GM13976 (cell line): ENCODE measurements at regions of chr2 and their contacts with region 1.

Region 1: DNA sequence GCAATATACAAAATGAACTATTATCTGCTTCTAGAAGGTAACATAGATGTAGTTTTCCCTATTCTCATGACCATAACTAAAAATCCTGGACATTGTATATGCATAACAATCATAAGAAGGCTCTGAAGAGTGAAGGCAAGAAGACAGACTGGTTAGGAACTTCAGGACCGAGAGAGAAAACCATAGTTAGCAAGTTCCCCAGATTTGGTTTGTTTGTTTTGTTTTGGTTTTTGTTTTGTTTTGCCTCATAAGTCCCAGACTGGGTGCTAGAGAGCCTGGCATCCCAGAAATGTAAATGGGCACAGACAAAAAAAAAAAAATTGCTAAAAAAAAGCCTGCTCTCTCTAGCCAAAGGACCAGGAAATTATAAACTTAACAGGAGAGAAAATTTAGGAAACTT is 192.2 kb upstream of the FBXO11 start:
- DNase-seq: no peak
- CTCF ChIP-seq: no peak

Region 2: DNA sequence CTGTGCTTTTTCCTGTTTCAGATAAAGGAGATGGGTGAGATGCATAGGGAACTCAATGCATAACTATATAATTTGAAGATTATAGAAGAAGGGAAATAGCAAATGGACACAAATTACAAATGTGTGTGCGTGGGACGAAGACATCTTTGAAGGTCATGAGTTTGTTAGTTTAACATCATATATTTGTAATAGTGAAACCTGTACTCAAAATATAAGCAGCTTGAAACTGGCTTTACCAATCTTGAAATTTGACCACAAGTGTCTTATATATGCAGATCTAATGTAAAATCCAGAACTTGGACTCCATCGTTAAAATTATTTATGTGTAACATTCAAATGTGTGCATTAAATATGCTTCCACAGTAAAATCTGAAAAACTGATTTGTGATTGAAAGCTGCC is 712.0 kb before region 1 on chr2:
- in situ Hi-C with region 1: no loop called
- DNase-seq: peak; percentile 59
- CTCF ChIP-seq: no peak

Region 3: GRCh38 chr2:47862949-47863348 is 235.6 kb before region 1 on chr2:
- in situ Hi-C with region 1: loop called (anchors 5 kb)
- DNase-seq: no peak
- CTCF ChIP-seq: no peak

Region 4: GRCh38 chr2:48292393-48292792 is 193.9 kb after region 1 on chr2:
- in situ Hi-C with region 1: no loop called
- DNase-seq: no peak
- CTCF ChIP-seq: no peak